Right cardiac atrium (tissue), 5 donors: ENCODE measurements at regions of chr10 and their contacts with region 1.

Region 1: GRCh38 chr10:15370856-15371701 is at the start of gene FAM171A1:
- DNase-seq: peak; percentile 71 to 88 (median 84)
- ATAC-seq: peak; percentile 79 to 82
- H3K4me3 ChIP-seq: peak within 1 kb of the TSS; percentile 99
- H3K27ac ChIP-seq: no peak within 1 kb of the TSS
- H3K4me1 ChIP-seq: no peaks in the 10 kb centered on the region
- H3K27me3 ChIP-seq: no peaks in the 10 kb centered on the region
- total RNA-seq, gene FAM171A1: 13.1 to 15.0 (median 13.8) TPM

Region 2: DNA sequence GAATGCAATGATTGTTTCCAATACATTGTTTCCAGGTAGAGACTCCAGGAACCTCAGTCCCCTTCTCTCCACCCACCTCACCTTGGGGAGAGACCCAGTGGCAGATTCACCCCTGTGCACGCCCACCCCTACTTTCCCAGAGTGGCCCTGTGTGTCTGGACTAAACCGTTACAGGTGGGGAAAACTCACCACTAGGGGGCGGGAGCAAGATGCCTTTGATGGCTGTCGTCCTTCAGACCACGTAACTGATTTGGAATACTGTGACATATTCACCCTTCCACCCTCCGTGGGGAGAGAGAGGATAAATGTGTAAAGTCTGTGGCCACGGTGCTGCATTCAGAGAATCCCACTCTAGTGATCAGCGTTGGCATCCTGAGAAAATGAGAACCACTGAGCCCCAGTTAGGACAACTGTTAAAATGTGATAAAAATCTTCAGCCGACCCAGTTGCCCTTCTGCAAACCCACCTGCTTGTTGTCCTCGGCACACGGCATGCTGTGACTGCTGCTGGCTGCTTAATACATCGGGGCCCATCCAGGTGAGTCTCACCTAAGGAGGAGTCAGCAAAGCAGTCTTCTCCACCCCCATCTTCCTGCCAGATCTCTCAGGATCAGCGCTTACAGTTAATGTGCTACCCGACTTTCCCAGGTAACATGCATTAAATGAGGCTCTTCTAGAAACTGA is 161.1 kb before region 1 on chr10:
- intact Hi-C with region 1: loop called in 3 of 4 experiments (anchors 2 to 5 kb)
- DNase-seq: peak; percentile 83 to 92 (median 84)
- ATAC-seq: peak; percentile 86 to 89
- H3K4me3 ChIP-seq: no peak overlapping the region
- H3K27ac ChIP-seq: no peak overlapping the region
- H3K4me1 ChIP-seq: no peaks in the 10 kb centered on the region
- H3K27me3 ChIP-seq: no peaks in the 10 kb centered on the region

Region 3: GRCh38 chr10:15262036-15262713 is 108.9 kb before region 1 on chr10:
- intact Hi-C with region 1: loop called in 3 of 4 experiments (anchors 2 to 5 kb)
- DNase-seq: peak in 1 of 3 donors; percentile 56
- ATAC-seq: peak; percentile 67 to 77
- H3K4me3 ChIP-seq: no peak overlapping the region
- H3K27ac ChIP-seq: no peak overlapping the region
- H3K4me1 ChIP-seq: no peaks in the 10 kb centered on the region
- H3K27me3 ChIP-seq: no peaks in the 10 kb centered on the region